ENCODE measurements at regions of chr5 and their contacts with region 1.

Region 1: GRCh38 chr5:154972476-154973080 is 31.7 kb downstream of the MRPL22 start:
- DNase-seq: peak; percentile 53
- ATAC-seq: peak; percentile 67
- H3K4me3 ChIP-seq: no peak overlapping the region
- H3K27ac ChIP-seq: no peak overlapping the region
- H3K4me1 ChIP-seq: peaks cover 1% of the 10 kb centered on the region; the same call in 1 of the 2 replicates
- H3K27me3 ChIP-seq: no peaks in the 10 kb centered on the region
- CTCF ChIP-seq: peak; percentile 67
- POLR2A ChIP-seq: no peak
- RAD21 ChIP-seq: peak; percentile 76

Region 2: GRCh38 chr5:154984946-154985516 is 12.5 kb after region 1 on chr5:
- CTCF ChIA-PET with region 1: interaction called, 11 read pairs
- POLR2A ChIA-PET with region 1: no interaction called
- dilution Hi-C with region 1: no loop called
- in situ Hi-C with region 1: no loop called
- intact Hi-C with region 1: no loop called
- DNase-seq: no peak
- ATAC-seq: no peak
- H3K4me3 ChIP-seq: no peak overlapping the region
- H3K27ac ChIP-seq: no peak overlapping the region
- H3K4me1 ChIP-seq: no peaks in the 10 kb centered on the region
- H3K27me3 ChIP-seq: no peaks in the 10 kb centered on the region; the same call in 1 of the 2 replicates
- CTCF ChIP-seq: no peak
- POLR2A ChIP-seq: no peak
- RAD21 ChIP-seq: no peak

Region 3: GRCh38 chr5:155004138-155004744 is 31.7 kb after region 1 on chr5:
- CTCF ChIA-PET with region 1: no interaction called
- POLR2A ChIA-PET with region 1: no interaction called
- dilution Hi-C with region 1: no loop called
- in situ Hi-C with region 1: no loop called
- intact Hi-C with region 1: loop called (anchors 1 kb)
- DNase-seq: no peak
- ATAC-seq: peak; percentile 48
- H3K4me3 ChIP-seq: no peak overlapping the region
- H3K27ac ChIP-seq: no peak overlapping the region
- H3K4me1 ChIP-seq: no peaks in the 10 kb centered on the region
- H3K27me3 ChIP-seq: no peaks in the 10 kb centered on the region
- CTCF ChIP-seq: peak; percentile 41
- POLR2A ChIP-seq: no peak
- RAD21 ChIP-seq: peak; percentile 42

Region 4: GRCh38 chr5:155147222-155147621 is 174.6 kb after region 1 on chr5:
- CTCF ChIA-PET with region 1: interaction called, 9 read pairs
- POLR2A ChIA-PET with region 1: no interaction called
- dilution Hi-C with region 1: no loop called
- in situ Hi-C with region 1: no loop called
- intact Hi-C with region 1: loop called (anchors 2 kb)
- DNase-seq: no peak
- ATAC-seq: no peak; the same call in 1 of the 2 replicates
- H3K4me3 ChIP-seq: no peak overlapping the region
- H3K27ac ChIP-seq: no peak overlapping the region
- H3K4me1 ChIP-seq: no peaks in the 10 kb centered on the region
- H3K27me3 ChIP-seq: no peaks in the 10 kb centered on the region
- CTCF ChIP-seq: peak; percentile 44
- POLR2A ChIP-seq: no peak
- RAD21 ChIP-seq: peak; percentile 49